ENCODE measurements at regions of chr19 and their contacts with region 1.

Region 1: GRCh38 chr19:11798391-11799330 is at the start of gene ZNF491:
- DNase-seq: peak; percentile 96
- CTCF ChIP-seq: peak; percentile 28

Region 2: DNA sequence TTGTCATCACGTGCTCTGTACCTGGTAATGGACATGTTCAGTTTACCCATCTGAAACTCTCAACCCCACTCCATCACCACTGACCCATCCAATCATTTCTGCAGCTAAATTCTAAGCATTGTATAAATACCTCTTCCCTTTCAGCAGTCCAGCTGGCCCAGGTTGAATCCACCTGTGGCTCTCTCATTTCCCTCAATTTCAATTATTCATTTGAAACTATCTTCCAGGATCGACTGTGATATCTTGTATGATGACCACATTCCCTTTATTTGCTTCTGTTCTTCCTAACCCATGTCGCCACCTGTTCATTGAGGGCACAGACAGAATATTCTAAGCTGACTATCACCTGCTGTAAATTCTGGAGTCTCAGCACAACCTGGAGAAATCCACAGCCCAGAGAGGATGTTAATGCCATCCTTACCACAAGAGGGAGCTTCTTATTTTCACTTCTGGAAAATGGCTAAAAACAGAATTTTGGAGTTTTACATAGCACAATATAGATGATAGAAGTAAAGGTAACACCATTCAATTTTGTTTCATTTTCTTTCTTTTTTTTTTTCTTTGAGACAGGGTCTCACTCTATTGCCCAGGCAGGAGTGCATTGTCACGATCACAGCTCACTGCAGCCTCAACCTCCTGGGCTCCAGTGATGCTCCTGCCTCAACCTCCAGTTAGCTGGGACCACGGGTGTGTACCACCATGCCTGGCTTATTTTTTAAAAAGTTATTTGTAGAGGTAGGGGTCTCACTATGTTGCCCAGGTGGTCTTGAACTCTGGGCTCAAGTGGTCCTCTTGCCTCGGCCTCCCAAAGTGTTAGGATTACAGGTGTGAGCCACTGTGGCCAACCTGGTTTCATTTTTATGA is 98.5 kb before region 1 on chr19:
- CTCF ChIA-PET with region 1: interaction called, 15 read pairs
- POLR2A ChIA-PET with region 1: no interaction called
- DNase-seq: no peak
- CTCF ChIP-seq: peak; percentile 54

Region 3: DNA sequence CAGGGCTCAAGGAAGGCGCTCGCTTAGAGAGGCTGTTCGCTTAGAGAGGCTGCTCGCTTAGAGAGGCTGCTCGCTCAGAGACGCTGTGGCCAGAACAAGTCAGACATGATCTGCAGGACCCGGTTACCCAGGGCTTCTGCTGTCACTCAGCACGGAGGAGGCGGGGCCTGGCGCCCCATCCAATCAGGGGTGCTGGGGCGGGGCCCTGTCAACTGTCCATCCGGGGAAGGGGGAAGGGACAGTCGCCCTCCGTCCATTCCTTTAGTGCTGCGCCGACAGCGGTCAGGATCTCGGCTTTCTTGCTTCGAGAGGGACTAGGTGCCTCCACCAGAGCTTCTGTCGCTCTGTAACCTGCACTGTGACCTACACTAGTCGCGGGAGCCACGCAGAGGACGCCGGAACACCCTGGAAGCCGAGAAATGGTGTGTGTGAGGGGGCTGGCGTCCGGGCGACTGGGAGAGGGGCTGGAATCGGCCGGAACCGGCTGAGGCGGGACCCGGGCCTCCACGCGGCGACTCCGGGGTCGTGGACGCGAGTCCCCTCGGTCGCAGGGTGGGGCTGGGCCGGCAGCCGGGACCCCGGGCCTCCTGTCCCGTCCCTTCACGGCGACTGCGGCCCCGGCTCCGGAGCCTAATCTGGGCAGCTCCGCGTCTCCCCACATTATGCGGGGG is 15.5 kb after region 1 on chr19 and contains the start of gene ZNF440:
- CTCF ChIA-PET with region 1: interaction called, 112 read pairs
- POLR2A ChIA-PET with region 1: interaction called, 10 read pairs
- DNase-seq: peak; percentile 97
- CTCF ChIP-seq: no peak

Region 4: GRCh38 chr19:11964858-11965645 is 166.4 kb after region 1 on chr19 and contains the start of gene ZNF763:
- CTCF ChIA-PET with region 1: interaction called, 20 read pairs
- POLR2A ChIA-PET with region 1: no interaction called
- DNase-seq: peak; percentile 92
- CTCF ChIP-seq: no peak

Region 5: GRCh38 chr19:12052497-12053169 is 254.0 kb after region 1 on chr19 and contains the start of gene ZNF878:
- CTCF ChIA-PET with region 1: interaction called, 15 read pairs
- POLR2A ChIA-PET with region 1: no interaction called
- DNase-seq: peak; percentile 87
- CTCF ChIP-seq: peak; percentile 35

Region 6: GRCh38 chr19:12092065-12092867 is 293.6 kb after region 1 on chr19:
- CTCF ChIA-PET with region 1: interaction called, 20 read pairs
- POLR2A ChIA-PET with region 1: no interaction called
- DNase-seq: peak; percentile 91
- CTCF ChIP-seq: no peak

Region 7: DNA sequence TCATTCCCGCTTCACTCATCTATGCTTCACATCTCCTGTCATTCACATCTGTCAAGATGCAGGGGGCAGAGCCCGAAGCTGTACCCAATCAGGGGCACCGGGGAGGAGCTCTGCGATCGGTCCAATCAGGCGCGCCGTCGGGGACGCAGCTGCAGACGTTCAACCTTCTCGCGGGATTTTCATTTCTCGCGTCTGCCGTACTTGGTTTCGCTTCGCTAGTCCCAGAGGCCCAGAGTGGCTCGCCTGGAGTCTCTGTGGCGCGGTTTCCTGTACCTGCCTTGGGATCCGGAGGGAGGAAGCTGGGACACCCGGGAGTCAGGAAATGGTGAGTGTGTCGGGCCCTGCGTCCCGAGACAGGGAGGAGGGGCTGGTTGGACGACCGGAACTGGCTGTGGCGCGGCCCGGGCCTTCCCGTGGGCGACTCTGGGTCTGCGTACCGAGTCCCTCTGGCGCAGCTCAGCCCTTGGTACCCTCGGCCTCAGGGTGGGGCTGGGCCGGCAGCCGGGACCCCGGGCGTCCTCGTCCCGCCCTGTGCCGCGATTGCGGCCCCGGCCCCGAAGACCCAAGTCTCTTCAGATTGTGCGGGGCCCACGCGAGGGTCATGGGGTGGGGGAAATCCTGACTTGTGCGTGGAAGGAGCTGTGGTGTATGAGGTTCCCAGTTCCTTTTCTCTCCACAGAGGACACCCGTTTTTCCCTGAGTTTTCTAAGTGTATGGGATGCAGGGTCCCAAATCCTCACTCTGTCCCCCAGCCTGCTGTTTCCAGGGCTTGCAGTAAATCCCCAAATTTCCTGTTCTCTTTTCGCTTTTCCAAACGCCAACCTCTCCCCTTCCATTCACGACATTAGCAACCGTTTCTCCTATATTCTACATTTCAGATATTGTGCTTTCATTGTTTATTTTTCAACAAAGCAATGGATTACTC is 364.5 kb after region 1 on chr19 and contains the start of gene ZNF136:
- CTCF ChIA-PET with region 1: interaction called, 16 read pairs
- POLR2A ChIA-PET with region 1: interaction called, 3 read pairs
- DNase-seq: peak; percentile 99
- CTCF ChIP-seq: no peak